ENCODE measurements at regions of chr9 and their contacts with region 1.

Region 1: DNA sequence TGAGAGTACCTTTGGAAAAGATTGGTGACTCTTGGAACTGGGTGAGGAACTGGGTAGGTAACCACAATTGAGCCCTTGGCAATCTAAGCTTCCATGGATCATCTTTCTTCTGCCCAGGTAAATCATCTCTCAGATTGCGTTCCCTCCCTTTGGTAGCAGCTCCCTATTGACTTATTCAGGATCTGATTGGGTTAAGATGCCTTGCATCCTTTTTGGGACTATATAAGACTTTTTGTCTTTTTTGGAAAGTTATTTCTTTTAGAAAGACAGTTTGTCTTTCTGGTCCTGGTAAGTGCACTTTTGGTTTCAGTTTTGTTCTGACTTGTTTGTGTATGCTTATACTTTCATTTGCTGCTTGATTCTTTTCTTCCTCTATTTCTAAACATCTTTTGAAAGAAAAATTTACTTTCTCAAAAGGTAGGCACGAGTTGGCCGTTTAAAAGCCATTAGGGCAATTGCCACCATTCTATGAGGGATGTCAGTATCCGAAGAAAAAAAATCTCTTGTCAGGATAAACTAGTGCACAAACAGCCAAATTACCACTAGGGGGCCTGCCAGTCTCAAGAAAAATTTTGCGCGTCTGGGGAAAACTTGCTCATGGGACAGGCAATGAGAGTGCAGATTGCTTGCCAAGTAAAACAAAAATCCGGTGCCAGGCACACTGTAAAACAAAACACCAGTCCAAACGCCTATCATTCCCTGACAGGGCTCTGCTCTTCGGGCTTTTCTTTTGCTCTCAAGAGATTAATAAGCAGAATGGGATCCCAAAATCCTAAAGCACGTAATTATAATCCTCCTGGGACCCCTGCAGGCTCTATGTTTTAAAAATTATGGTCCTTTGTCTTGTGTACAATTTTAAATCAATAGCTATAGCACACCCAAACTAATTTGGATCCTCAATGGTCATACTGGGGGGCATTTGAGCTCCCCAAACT is 12.8 kb downstream of the OR1J1 start:
- DNase-seq: peak; percentile 75
- H3K4me3 Mint-ChIP-seq: peak overlapping the region; percentile 73
- H3K27ac Mint-ChIP-seq: peak overlapping the region; percentile 39
- H3K4me1 Mint-ChIP-seq: peaks cover 10% of the 10 kb centered on the region
- H3K27me3 Mint-ChIP-seq: peaks cover 25% of the 10 kb centered on the region

Region 2: GRCh38 chr9:122498883-122499288 is 34.0 kb after region 1 on chr9:
- CTCF ChIA-PET with region 1: interaction called, 16 read pairs
- POLR2A ChIA-PET with region 1: no interaction called
- intact Hi-C with region 1: no loop called
- DNase-seq: peak; percentile 17
- H3K4me3 Mint-ChIP-seq: no peak overlapping the region
- H3K27ac Mint-ChIP-seq: no peak overlapping the region
- H3K4me1 Mint-ChIP-seq: no peaks in the 10 kb centered on the region
- H3K27me3 Mint-ChIP-seq: peaks cover 36% of the 10 kb centered on the region

Measured in activated CD4-positive, alpha-beta memory T cell treated with anti-CD3 and anti-CD28 coated beads for 36 hours (primary cell).